Gastrocnemius medialis (tissue), 4 donors: ENCODE measurements at regions of chr18 and their contacts with region 1.

Region 1: DNA sequence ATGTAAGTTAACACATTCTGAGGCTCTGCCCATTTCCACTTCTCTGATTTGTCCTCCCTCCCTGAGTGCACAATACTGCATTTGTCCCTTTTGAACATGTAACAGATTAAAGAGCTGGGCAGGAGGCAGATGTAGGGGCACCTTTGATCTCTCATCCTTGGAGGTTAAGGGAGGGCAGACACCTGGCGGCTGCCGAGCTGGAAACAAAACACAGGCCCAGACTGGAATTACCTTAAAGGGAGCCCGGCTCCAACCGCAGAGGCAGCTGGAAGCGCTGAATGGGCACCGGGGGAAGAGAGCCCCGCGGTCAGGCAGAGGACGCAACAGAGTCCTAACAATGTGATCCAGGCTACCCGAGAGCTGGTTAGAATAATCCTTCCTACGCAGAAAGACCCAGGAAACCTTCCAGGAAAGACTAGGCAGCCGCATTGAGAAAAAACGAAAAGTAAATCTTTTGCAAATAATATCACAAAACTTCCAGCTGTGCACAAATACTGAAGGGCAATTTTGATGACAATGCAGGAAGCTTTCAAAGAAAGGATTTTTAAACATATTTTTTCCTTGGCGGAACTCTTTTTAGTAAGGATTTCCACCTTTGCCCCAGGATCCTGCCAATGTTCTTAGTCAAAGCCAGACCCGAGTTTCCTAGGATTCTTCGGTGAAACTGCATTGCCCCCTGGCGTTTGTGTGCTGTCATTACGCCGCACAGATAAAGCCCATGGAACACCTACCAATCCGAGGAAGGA is 216.0 kb downstream of the TGIF1 start:
- DNase-seq: peak; percentile 58 to 68
- ATAC-seq: peak; percentile 93 to 96
- H3K4me3 ChIP-seq: peak overlapping the region; percentile 16 to 42 (median 28)
- H3K27ac ChIP-seq: peak overlapping the region; percentile 2 to 44 (median 26)
- H3K4me1 ChIP-seq: peaks cover 0 to 5% of the 10 kb centered on the region in 2 donors
- H3K27me3 ChIP-seq: no peaks in the 10 kb centered on the region
- CTCF ChIP-seq: peak; percentile 89 to 94 (median 90)
- POLR2A ChIP-seq: no peak

Region 2: DNA sequence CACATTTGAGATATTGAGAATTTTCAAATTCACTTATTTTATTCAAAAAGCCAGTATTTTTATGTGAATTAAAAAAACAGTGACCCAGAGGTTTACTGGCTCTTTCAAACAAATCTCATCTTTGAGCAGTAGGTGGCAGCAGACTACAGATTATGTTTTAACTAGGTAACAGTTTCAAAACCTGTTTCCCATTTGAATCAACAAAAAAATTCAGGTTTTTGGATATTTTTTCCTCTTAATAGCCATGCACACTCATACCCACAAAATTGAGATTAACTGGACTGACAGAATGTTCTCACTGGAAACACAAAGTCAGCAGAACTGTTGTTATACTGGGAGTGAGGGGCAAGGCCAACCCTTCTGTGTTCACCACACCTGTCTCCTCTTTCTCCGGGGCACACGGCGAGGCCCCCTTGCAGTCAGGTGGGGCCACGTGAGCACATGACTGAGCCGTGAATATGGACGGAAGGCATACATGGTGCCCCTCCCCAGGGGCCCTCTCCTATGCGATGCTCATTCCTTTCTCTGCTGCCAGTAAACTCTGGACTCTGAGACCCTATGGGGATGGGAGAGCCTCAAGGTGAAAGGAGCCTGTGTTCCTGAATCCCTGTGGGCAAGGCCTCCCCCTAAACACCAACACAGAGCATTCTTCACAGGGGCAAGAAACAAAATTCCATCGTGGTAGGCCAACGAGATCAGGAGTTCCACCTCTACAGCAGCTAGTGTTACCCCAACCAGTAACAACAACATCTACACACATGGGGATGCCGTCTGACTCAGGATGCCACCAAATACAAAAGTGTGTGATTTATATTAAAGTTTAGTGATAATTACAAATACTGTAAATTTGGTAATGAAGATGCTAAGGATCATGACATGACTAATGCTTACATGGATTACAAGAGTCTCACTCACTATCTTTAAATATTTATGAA is 733.4 kb before region 1 on chr18:
- in situ Hi-C with region 1: no loop called
- intact Hi-C with region 1: loop called (anchors 10 kb)
- DNase-seq: no peak
- ATAC-seq: peak; percentile 26 to 64
- H3K4me3 ChIP-seq: no peak overlapping the region
- H3K27ac ChIP-seq: no peak overlapping the region
- H3K4me1 ChIP-seq: no peaks in the 10 kb centered on the region
- H3K27me3 ChIP-seq: no peaks in the 10 kb centered on the region
- CTCF ChIP-seq: peak; percentile 54 to 89 (median 80)
- POLR2A ChIP-seq: no peak

Region 3: DNA sequence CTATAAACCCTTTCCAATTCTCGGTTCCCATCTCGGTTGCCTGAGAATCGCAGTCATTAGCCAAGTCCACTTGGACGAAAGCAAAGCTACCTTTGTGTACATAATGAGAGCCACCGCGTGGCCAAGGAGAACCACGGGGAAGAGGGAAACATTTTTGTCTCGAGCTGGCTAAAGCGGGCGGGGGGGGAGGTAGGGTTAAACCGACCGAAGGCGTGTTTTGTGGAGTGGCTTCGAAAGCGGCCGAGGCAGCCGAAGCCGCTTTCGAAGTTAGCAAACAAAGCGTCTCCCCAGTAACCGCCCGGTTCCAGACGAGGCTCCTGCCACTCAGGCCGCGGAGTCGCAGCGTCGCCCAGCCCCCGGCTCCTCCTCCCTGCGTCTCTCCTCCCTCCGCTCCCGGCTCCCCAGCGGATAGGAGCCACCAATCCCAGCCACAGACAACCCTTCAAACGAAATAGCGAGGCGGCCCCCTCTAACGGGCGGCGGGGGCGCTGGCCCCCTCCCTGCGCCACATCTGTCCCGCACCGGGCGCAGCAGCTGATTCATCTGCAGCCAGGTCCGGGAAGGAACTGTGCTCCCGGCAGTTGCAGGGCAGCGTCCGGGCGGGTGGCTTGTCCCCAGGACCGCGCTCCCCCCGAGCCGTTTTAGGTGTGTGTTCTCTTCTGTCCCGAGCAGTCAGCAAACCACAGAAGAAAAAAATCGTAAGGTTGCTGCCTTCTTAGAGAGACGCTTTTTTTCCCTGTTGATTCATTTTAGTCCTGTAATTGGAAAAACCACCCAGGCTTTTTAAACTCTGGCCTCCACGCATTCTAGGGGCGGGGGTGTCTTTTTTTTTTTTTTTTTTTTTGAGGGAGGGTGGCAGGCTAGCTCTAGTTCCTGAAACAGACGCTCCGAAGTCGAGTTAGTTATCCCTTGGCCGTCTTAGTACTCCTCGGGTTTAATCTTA is 217.8 kb before region 1 on chr18:
- in situ Hi-C with region 1: loop called in 2 of 4 experiments (anchors 10 kb)
- intact Hi-C with region 1: no loop called
- DNase-seq: peak; percentile 94 to 95
- ATAC-seq: peak; percentile 55 to 57
- H3K4me3 ChIP-seq: peak overlapping the region; percentile 71 to 97 (median 82)
- H3K27ac ChIP-seq: peak overlapping the region; percentile 98 to 99 (median 99)
- H3K4me1 ChIP-seq: peaks cover 8 to 13% of the 10 kb centered on the region in 2 donors
- H3K27me3 ChIP-seq: no peaks in the 10 kb centered on the region
- CTCF ChIP-seq: peak in 1 of 5 experiments; percentile 7
- POLR2A ChIP-seq: peak; percentile 97 to 98

Region 4: DNA sequence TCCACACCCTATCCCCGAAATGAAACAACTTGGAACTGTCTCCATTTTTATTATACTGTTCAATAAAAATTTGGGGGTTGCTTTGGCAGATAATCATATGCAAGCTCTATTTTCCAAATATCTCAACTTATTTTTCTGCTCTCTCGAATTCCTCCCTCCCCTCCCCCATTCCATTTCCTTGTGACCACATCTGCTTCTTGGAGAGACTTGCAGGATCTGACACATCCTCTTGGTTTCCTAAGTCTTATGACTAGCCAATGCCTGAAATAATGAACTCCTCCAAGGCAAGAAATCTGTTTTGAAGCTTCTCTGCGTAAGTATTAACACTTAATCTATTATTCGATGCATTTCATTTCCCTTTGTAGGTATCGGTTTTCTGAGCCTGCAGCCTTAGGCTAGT is 199.9 kb before region 1 on chr18:
- in situ Hi-C with region 1: loop called in 2 of 4 experiments (anchors 10 kb)
- intact Hi-C with region 1: no loop called
- DNase-seq: no peak
- ATAC-seq: no peak
- H3K4me3 ChIP-seq: no peak overlapping the region
- H3K27ac ChIP-seq: no peak overlapping the region
- H3K4me1 ChIP-seq: no peaks in the 10 kb centered on the region
- H3K27me3 ChIP-seq: no peaks in the 10 kb centered on the region
- CTCF ChIP-seq: no peak
- POLR2A ChIP-seq: no peak

Region 5: GRCh38 chr18:3593904-3594661 is 71.9 kb before region 1 on chr18:
- in situ Hi-C with region 1: loop called in 3 of 4 experiments (anchors 5 to 10 kb)
- intact Hi-C with region 1: loop called (anchors 2 kb)
- DNase-seq: peak; percentile 77 to 79
- ATAC-seq: peak; percentile 67 to 72
- H3K4me3 ChIP-seq: peak overlapping the region; percentile 56 to 60 (median 58)
- H3K27ac ChIP-seq: peak overlapping the region; percentile 86 to 95 (median 91)
- H3K4me1 ChIP-seq: peaks cover 35 to 44% of the 10 kb centered on the region in 2 donors
- H3K27me3 ChIP-seq: no peaks in the 10 kb centered on the region
- CTCF ChIP-seq: peak; percentile 61 to 94 (median 85)
- POLR2A ChIP-seq: peak; percentile 50 to 65